WTC11 (cell line): ENCODE measurements at regions of chr14 and their contacts with region 1.

Region 1: DNA sequence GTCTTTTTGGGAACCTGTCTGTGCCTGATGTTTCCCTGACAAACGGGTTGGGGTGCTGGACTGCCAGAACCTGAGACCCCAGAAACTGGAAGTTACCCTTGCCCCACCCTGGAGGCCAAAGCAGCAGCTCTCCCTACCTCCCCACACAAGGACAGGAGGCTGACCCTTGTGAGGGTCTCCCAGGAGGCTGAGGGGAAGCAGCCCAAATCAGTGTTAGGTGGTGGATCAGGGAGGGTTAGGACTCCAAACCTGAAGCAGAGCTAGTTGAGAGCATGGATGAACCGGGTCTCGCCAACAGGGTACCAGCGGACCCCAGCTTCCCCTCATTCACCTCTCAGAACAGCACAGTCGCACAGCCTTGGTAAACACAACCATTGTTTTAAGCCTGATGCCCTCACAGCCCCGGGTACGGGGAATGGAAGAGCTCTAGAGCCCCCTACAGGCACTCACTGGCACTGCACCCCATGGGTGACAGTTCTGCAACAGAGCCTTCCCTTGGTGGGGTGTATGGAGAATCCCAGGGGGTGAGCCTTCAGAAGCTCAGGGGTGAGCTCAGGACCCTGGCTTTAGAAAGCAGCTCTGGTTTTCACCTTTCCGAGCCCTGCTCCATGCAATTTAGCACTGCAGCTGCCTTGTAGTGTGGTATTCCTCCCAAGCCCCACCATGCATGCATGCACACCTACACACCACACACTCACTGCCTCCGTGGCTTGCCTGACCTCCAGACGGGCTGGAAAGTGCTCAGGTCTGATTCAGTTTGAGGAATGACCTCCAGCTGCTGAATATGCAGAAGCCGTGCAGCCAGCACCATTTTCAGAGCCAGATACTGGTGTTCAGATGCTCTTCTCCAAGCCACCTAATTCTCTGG is 11.2 kb downstream of the ESRRB start:
- DNase-seq: peak; percentile 91
- ATAC-seq: peak; percentile 97
- H3K4me3 Mint-ChIP-seq: no peak overlapping the region
- H3K27ac Mint-ChIP-seq: no peak overlapping the region
- H3K4me1 Mint-ChIP-seq: peaks cover 4% of the 10 kb centered on the region; the same call in 1 of the 2 replicates
- H3K27me3 Mint-ChIP-seq: 0 out of 2 replicates have a peak, but pooled peaks cover 3% of the 10 kb centered on the region
- CTCF ChIP-seq: peak; percentile 99

Region 2: GRCh38 chr14:76056128-76056527 is 331.0 kb before region 1 on chr14:
- CTCF ChIA-PET with region 1: interaction called, 35 read pairs
- POLR2A ChIA-PET with region 1: no interaction called
- DNase-seq: peak; percentile 21
- ATAC-seq: peak; percentile 90
- H3K4me3 Mint-ChIP-seq: no peak overlapping the region
- H3K27ac Mint-ChIP-seq: peak overlapping the region; percentile 9; the same call in 1 of the 2 replicates
- H3K4me1 Mint-ChIP-seq: no peaks in the 10 kb centered on the region; the same call in 1 of the 2 replicates
- H3K27me3 Mint-ChIP-seq: no peaks in the 10 kb centered on the region
- CTCF ChIP-seq: no peak

Region 3: GRCh38 chr14:76307786-76308780 is 79.1 kb before region 1 on chr14:
- CTCF ChIA-PET with region 1: interaction called, 10 read pairs
- POLR2A ChIA-PET with region 1: no interaction called
- DNase-seq: no peak
- ATAC-seq: no peak
- H3K4me3 Mint-ChIP-seq: no peak overlapping the region
- H3K27ac Mint-ChIP-seq: no peak overlapping the region
- H3K4me1 Mint-ChIP-seq: peaks cover 47% of the 10 kb centered on the region
- H3K27me3 Mint-ChIP-seq: peaks cover 52% of the 10 kb centered on the region
- CTCF ChIP-seq: no peak

Region 4: GRCh38 chr14:76375947-76376404 is 11.2 kb before region 1 on chr14 and contains the start of gene ESRRB:
- CTCF ChIA-PET with region 1: interaction called, 29 read pairs
- POLR2A ChIA-PET with region 1: no interaction called
- DNase-seq: peak; percentile 43
- ATAC-seq: peak; percentile 94
- H3K4me3 Mint-ChIP-seq: peak within 1 kb of the TSS; percentile 96
- H3K27ac Mint-ChIP-seq: no peak within 1 kb of the TSS
- H3K4me1 Mint-ChIP-seq: peaks cover 22% of the 10 kb centered on the region
- H3K27me3 Mint-ChIP-seq: peaks cover 86% of the 10 kb centered on the region
- CTCF ChIP-seq: no peak
- total RNA-seq, gene ESRRB: 1.4 to 1.8 TPM (median 1.6 TPM) in 3 replicates

Region 5: GRCh38 chr14:76836029-76836630 is 449.0 kb after region 1 on chr14:
- CTCF ChIA-PET with region 1: no interaction called
- POLR2A ChIA-PET with region 1: no interaction called
- DNase-seq: no peak
- ATAC-seq: no peak
- H3K4me3 Mint-ChIP-seq: no peak overlapping the region
- H3K27ac Mint-ChIP-seq: no peak overlapping the region
- H3K4me1 Mint-ChIP-seq: peaks cover 3% of the 10 kb centered on the region; the same call in 1 of the 2 replicates
- H3K27me3 Mint-ChIP-seq: no peaks in the 10 kb centered on the region
- CTCF ChIP-seq: no peak